Psoas muscle (tissue), 8 donors: ENCODE measurements at regions of chr9 and their contacts with region 1.

Region 1: GRCh38 chr9:19102631-19103345 is at the start of gene HAUS6:
- DNase-seq: peak; percentile 97 to 99
- ATAC-seq: peak; percentile 90 to 99 (median 92)
- H3K4me3 ChIP-seq: peak within 1 kb of the TSS; percentile 88
- H3K27ac ChIP-seq: peak within 1 kb of the TSS; percentile 93
- H3K4me1 ChIP-seq: peaks cover 13% of the 10 kb centered on the region
- H3K27me3 ChIP-seq: no peaks in the 10 kb centered on the region
- CTCF ChIP-seq: peak; percentile 59
- total RNA-seq, gene HAUS6: 3.3 to 10.9 (median 4.1) TPM

Region 2: GRCh38 chr9:19048966-19049916 is 53.5 kb before region 1 on chr9 and contains the start of gene RRAGA:
- intact Hi-C with region 1: loop called in 1 of 2 experiments (anchors 5 kb)
- DNase-seq: peak; percentile 95 to 97
- ATAC-seq: peak; percentile 95 to 97 (median 96)
- H3K4me3 ChIP-seq: peak within 1 kb of the TSS; percentile 94
- H3K27ac ChIP-seq: peak within 1 kb of the TSS; percentile 97
- H3K4me1 ChIP-seq: peaks cover 29% of the 10 kb centered on the region
- H3K27me3 ChIP-seq: no peaks in the 10 kb centered on the region
- CTCF ChIP-seq: peak; percentile 87
- total RNA-seq, gene RRAGA: 88.3 to 107 (median 94.2) TPM

Region 3: GRCh38 chr9:19174127-19174912 is 71.5 kb after region 1 on chr9:
- intact Hi-C with region 1: loop called in 1 of 2 experiments (anchors 5 kb)
- DNase-seq: peak; percentile 83 to 89
- ATAC-seq: peak; percentile 93 to 99 (median 96)
- H3K4me3 ChIP-seq: no peak overlapping the region
- H3K27ac ChIP-seq: no peak overlapping the region
- H3K4me1 ChIP-seq: no peaks in the 10 kb centered on the region
- H3K27me3 ChIP-seq: no peaks in the 10 kb centered on the region
- CTCF ChIP-seq: peak; percentile 73

Region 4: DNA sequence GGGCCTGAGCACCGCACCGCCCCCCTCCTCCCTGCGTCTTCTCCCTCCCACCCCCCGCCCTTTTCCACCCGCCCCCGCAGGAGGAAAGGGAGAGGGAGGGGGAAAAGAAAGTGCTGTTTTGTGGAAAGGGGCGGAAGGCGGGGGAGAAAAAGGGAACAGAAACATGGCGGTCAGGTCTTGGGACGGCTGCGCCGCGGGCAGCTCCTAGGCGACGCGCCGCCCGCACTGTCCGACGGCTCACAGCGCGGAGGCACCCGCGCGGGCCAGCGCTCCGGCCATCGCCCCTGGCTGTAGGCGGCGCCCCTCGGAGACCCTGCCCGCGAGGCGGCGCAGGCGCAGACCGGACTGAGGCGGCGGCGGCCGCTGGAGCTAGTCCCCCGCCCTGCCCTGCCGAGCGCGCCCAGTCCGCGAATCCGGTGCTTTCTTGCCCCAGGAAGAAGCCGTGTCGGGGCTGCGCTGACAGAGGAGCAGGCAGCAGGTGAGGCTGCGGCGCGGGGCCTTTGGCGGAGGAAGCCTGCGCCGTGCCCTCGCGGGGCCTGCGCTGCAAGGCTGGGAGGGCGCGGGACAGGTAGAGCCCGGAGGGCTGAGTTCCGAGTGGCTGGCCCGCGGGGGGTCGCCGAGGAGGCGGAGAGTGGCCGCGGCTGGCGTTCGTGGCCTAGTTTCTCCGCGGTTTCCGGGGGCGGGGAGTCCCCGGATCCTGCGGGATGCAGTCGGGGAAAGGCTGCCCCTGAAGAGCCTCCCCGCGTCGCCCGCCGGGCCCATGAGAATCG is 127.8 kb after region 1 on chr9 and contains the start of gene DENND4C:
- intact Hi-C with region 1: loop called in 1 of 2 experiments (anchors 5 kb)
- DNase-seq: peak; percentile 86 to 92
- ATAC-seq: peak; percentile 88 to 91 (median 90)
- H3K4me3 ChIP-seq: peak within 1 kb of the TSS; percentile 100
- H3K27ac ChIP-seq: peak within 1 kb of the TSS; percentile 97
- H3K4me1 ChIP-seq: peaks cover 20% of the 10 kb centered on the region
- H3K27me3 ChIP-seq: no peaks in the 10 kb centered on the region
- CTCF ChIP-seq: peak; percentile 8
- total RNA-seq, gene DENND4C: 12.2 to 16.4 (median 13.9) TPM

Region 5: DNA sequence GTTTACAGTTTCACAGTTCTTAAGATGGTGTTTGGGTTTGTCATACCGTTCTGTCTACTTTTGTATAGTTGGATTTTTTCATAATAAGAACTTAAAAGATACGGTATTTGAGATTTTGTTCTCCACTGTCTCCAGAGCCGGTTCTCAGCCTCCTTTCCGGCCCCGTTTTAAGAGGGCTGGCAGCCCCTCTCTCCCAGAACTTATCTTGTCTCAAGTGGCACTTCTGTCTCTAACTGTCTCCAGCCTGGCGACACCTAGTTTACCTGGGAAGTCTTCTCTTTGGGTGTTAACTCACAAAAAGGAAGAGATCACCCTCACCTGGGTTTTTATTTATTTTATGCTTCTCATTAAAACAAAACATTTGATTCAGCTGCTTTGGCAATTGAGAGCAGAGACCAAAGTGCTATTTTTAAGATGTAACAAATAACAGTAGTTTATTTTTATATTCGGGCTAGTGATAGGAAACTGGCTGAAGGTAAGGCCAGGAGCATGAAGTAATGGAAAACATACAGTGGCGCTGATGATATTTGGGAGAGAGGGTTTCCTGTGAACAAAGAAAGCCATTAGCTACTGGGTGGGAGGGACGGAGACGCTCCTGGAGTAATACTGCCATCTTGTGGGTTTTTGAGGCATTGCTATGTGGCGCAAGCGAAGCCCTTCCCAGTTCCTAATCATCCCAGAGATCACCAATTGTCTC is 354.4 kb after region 1 on chr9:
- intact Hi-C with region 1: loop called in 1 of 2 experiments (anchors 10 kb)
- DNase-seq: peak; percentile 37 to 61
- ATAC-seq: peak; percentile 89 to 100 (median 96)
- H3K4me3 ChIP-seq: peak overlapping the region; percentile 25
- H3K27ac ChIP-seq: no peak overlapping the region
- H3K4me1 ChIP-seq: peaks cover 8% of the 10 kb centered on the region
- H3K27me3 ChIP-seq: no peaks in the 10 kb centered on the region
- CTCF ChIP-seq: peak; percentile 98